ENCODE measurements at regions of chr17 and their contacts with region 1.

Region 1: DNA sequence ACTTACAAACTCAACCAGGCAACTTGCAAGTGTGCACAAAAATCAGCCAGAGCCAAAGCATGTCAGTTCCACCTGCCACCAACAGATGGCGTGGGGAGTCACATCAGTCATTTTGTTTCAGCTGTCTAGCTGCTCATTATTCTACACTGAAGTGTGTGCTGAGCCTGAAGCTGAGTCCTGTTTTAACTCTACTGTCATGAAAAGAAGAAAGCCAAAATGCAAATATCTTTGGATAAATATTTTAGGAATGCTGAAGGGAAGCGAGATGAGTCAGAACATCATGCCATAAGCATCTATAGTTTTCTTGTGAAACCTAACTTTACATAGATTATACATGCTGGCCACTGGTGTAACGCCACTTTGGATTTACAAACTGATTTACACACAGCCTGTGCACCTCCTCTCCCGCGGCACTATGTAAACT is 172.6 kb downstream of the CDK5R1 start:
- DNase-seq: peak; percentile 49 to 69 (median 61)
- ATAC-seq: peak; percentile 91 to 95 (median 94)
- H3K4me3 ChIP-seq: no peak overlapping the region
- H3K27ac ChIP-seq: no peak overlapping the region
- H3K4me1 ChIP-seq: peaks cover 0 to 4% (median 0%) of the 10 kb centered on the region in 4 donors
- H3K27me3 ChIP-seq: no peaks in the 10 kb centered on the region
- CTCF ChIP-seq: peak; percentile 85 to 92 (median 92)
- POLR2A ChIP-seq: no peak

Region 2: GRCh38 chr17:32752934-32753333 is 93.5 kb after region 1 on chr17:
- intact Hi-C with region 1: loop called in 1 of 2 experiments (anchors 5 kb)
- DNase-seq: no peak
- ATAC-seq: no peak
- H3K4me3 ChIP-seq: no peak overlapping the region
- H3K27ac ChIP-seq: no peak overlapping the region
- H3K4me1 ChIP-seq: peaks cover 0 to 5% (median 0%) of the 10 kb centered on the region in 4 donors
- H3K27me3 ChIP-seq: no peaks in the 10 kb centered on the region
- CTCF ChIP-seq: no peak
- POLR2A ChIP-seq: no peak